ENCODE measurements at regions of chr16 and their contacts with region 1.

Region 1: GRCh38 chr16:84175350-84176081 is 11.3 kb downstream of the TAF1C start:
- DNase-seq: peak in 7 of 9 donors; percentile 26 to 63 (median 37)
- ATAC-seq: peak; percentile 86
- H3K4me3 ChIP-seq: no peak overlapping the region
- H3K4me3 Mint-ChIP-seq: no peak overlapping the region
- H3K27ac ChIP-seq: no peak overlapping the region
- H3K27ac Mint-ChIP-seq: peak overlapping the region in 7 of 9 donors; percentile 5 to 79 (median 39)
- H3K4me1 ChIP-seq: no peaks in the 10 kb centered on the region
- H3K4me1 Mint-ChIP-seq: peaks cover 4 to 6% (median 6%) of the 10 kb centered on the region in 7 donors
- H3K27me3 ChIP-seq: no peaks in the 10 kb centered on the region
- H3K27me3 Mint-ChIP-seq: peaks cover 0 to 4% (median 0%) of the 10 kb centered on the region in 5 donors

Region 2: DNA sequence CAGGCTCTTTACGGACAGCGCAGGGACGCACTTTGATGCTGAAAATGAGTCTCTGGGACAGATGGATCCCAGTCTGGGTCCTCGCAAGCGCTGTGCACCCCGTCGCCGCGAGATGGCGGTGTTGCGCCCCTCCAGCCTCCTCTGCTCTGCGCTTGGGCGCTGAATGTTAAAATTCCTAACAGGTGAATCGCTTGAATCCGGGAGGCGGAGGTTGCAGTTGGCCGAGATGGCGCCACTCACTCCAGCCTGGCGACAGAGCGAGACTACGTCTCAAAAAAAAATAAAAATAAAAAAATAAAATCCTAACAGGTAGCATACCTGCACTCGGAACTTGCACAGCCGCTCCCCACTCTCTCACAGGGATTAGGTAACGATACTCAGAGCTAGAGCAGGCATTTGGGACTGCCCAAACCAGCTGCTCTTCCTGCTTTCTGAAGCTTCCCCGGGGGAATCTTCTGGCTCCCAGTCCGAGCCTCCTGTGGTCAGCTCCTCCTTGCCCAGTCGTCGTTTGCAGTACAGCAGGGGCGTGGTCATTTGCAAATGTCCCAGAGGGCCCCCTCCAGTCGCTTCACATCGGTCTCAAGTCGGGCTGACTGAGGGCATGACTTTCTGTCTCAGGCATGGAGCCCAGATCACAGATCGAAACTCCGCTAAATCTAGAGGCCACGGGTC is 248.7 kb before region 1 on chr16:
- CTCF ChIA-PET with region 1: interaction called, 3 read pairs
- POLR2A ChIA-PET with region 1: no interaction called
- intact Hi-C with region 1: loop called in 1 of 2 experiments (anchors 1 kb)
- DNase-seq: peak in 7 of 9 donors; percentile 25 to 71 (median 49)
- ATAC-seq: peak; percentile 79
- H3K4me3 ChIP-seq: no peak overlapping the region
- H3K4me3 Mint-ChIP-seq: no peak overlapping the region
- H3K27ac ChIP-seq: no peak overlapping the region
- H3K27ac Mint-ChIP-seq: no peak overlapping the region
- H3K4me1 ChIP-seq: no peaks in the 10 kb centered on the region
- H3K4me1 Mint-ChIP-seq: peaks cover 0 to 5% (median 4%) of the 10 kb centered on the region in 7 donors
- H3K27me3 ChIP-seq: no peaks in the 10 kb centered on the region
- H3K27me3 Mint-ChIP-seq: no peaks in the 10 kb centered on the region

Region 3: GRCh38 chr16:83952940-83953795 is 222.3 kb before region 1 on chr16 and contains the start of gene OSGIN1:
- CTCF ChIA-PET with region 1: interaction called, 10 read pairs
- POLR2A ChIA-PET with region 1: no interaction called
- intact Hi-C with region 1: no loop called
- DNase-seq: peak in 4 of 9 donors; percentile 14 to 81 (median 28)
- ATAC-seq: peak; percentile 84
- H3K4me3 ChIP-seq: no peak within 1 kb of the TSS
- H3K4me3 Mint-ChIP-seq: peak within 1 kb of the TSS in 9 of 10 donors; percentile 48 to 86 (median 66)
- H3K27ac ChIP-seq: no peak within 1 kb of the TSS
- H3K27ac Mint-ChIP-seq: peak within 1 kb of the TSS in 1 of 9 donors; percentile 63
- H3K4me1 ChIP-seq: peaks cover 0 to 14% of the 10 kb centered on the region in 2 donors
- H3K4me1 Mint-ChIP-seq: peaks cover 0 to 12% (median 9%) of the 10 kb centered on the region in 7 donors
- H3K27me3 ChIP-seq: peaks cover 0 to 6% of the 10 kb centered on the region in 2 donors
- H3K27me3 Mint-ChIP-seq: peaks cover 7 to 36% (median 17%) of the 10 kb centered on the region in 5 donors
- total RNA-seq, gene OSGIN1: 0.34 to 8.4 (median 1.3) TPM

Region 4: GRCh38 chr16:84084570-84085270 is 90.8 kb before region 1 on chr16:
- CTCF ChIA-PET with region 1: interaction called, 16 read pairs
- POLR2A ChIA-PET with region 1: no interaction called
- intact Hi-C with region 1: loop called (anchors 1 kb)
- DNase-seq: peak; percentile 31 to 71 (median 65)
- ATAC-seq: peak; percentile 87
- H3K4me3 ChIP-seq: no peak overlapping the region
- H3K4me3 Mint-ChIP-seq: peak overlapping the region in 1 of 10 donors; percentile 18
- H3K27ac ChIP-seq: no peak overlapping the region
- H3K27ac Mint-ChIP-seq: peak overlapping the region in 1 of 9 donors; percentile 15
- H3K4me1 ChIP-seq: peaks cover 4 to 24% of the 10 kb centered on the region in 2 donors
- H3K4me1 Mint-ChIP-seq: peaks cover 31 to 59% (median 52%) of the 10 kb centered on the region in 7 donors
- H3K27me3 ChIP-seq: no peaks in the 10 kb centered on the region
- H3K27me3 Mint-ChIP-seq: no peaks in the 10 kb centered on the region

Region 5: DNA sequence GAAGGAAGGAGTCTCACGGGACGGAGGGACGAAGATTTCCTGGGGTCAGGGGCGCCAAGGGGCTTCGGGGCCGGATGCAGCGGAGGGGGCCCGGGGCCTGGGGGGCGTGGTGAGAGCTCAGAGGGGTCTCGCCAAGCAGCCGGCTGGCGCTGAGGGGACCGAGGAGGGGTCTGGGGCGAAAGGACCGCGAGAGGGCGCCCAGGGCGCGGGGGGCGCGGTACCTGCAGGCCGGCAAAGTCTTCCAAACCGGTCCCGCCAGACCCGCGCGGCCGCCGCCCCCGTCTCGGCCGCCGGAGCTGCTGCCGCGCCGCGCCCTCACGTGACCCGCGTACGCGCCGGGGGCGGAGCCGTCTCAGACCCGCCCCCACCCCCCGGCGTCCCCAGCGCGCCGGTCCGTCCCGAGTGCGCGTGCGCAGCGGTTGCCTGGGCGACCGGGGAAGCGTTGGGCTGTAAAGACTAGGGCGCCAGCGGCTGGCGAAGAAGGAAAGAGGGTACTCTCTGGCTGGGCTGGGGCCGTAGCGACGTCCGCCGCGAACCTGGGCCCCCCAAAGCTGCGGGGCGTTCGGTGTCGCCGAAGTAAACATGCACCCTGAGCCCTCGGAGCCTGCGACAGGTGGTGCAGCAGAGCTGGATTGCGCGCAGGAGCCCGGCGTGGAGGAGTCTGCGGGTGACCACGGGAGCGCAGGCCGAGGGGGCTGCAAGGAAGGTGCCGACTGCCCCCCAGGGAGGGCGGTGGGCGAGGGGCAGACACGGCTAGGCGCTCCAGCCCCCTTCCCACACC is 30.5 kb before region 1 on chr16 and contains the starts of genes DNAAF1 and HSDL1:
- CTCF ChIA-PET with region 1: interaction called, 4 read pairs
- POLR2A ChIA-PET with region 1: no interaction called
- intact Hi-C with region 1: loop called in 1 of 2 experiments (anchors 1 kb)
- DNase-seq: peak; percentile 88 to 99 (median 94)
- ATAC-seq: peak; percentile 95
- H3K4me3 ChIP-seq: peak within 1 kb of the TSS; percentile 68
- H3K4me3 Mint-ChIP-seq: peak within 1 kb of the TSS; percentile 91 to 98 (median 94)
- H3K27ac ChIP-seq: peak within 1 kb of the TSS; percentile 87
- H3K27ac Mint-ChIP-seq: peak within 1 kb of the TSS; percentile 79 to 95 (median 89)
- H3K4me1 ChIP-seq: peaks cover 4 to 8% of the 10 kb centered on the region in 2 donors
- H3K4me1 Mint-ChIP-seq: peaks cover 9 to 32% (median 29%) of the 10 kb centered on the region in 7 donors
- H3K27me3 ChIP-seq: no peaks in the 10 kb centered on the region
- H3K27me3 Mint-ChIP-seq: peaks cover 0 to 22% (median 0%) of the 10 kb centered on the region in 5 donors
- total RNA-seq, gene DNAAF1: 0.66 to 2.2 TPM in 2 of 5 experiments, not detected in the others
- total RNA-seq, gene HSDL1: 12.6 to 26.6 (median 14.4) TPM